Heart left ventricle (tissue), 16 donors: ENCODE measurements at regions of chr11 and their contacts with region 1.

Region 1: DNA sequence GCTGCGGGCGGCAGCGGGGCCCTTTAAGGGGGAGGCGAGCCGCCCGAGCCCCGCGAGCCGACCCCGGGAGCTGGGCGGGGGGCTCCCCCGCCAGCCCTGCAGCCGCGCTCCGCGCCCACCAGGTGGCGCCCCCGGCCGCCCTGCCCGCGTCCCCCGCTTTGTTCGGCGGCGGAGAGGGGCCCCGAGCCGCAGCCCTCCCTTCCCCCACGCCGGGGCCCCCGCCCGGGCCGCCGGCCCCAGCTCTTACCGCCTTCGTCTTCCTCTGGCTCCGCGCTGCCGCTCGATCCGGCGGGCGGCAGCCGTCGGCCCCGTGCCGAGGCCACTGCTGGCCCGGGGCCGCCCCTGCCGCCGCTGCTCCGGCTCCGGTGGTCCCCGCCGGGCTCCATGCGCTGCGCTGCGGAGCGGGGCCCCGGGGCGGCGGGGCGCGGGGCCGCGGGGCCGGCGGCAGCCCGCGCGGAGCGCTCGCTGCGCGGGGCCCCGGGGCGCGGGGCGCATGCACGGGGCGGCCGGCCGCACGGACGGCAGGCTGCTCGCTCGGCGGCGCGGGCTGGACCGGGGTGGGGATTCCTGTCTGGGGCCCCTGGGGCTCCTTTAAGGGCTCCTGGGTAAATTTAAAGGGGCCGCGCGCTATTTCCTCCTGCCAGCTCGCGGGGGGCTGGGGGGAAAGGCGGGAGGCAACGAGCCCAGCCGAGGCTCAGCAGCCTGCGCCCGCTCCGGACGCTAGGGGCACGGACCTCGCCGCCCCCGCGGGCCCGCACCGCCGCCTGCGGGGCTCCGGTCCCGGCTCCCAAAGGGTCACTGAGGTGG is at the start of gene ZFTA:
- DNase-seq: peak; percentile 72 to 85 (median 76)
- ATAC-seq: peak in 3 of 4 donors; percentile 39 to 49 (median 44)
- H3K4me3 ChIP-seq: peak within 1 kb of the TSS; percentile 62 to 99 (median 88)
- H3K27ac ChIP-seq: peak within 1 kb of the TSS; percentile 72 to 91 (median 86)
- H3K4me1 ChIP-seq: peaks cover 0 to 39% (median 21%) of the 10 kb centered on the region in 12 donors
- H3K27me3 ChIP-seq: peaks cover 0 to 10% (median 0%) of the 10 kb centered on the region in 9 donors
- CTCF ChIP-seq: peak in 11 of 12 donors; percentile 9 to 96 (median 65)
- POLR2A ChIP-seq: no peak
- total RNA-seq, gene ZFTA: 8.1 to 17.9 (median 10.6) TPM

Region 2: GRCh38 chr11:63813035-63813562 is 44.7 kb after region 1 on chr11 and contains the start of gene SPINDOC:
- intact Hi-C with region 1: loop called (anchors 1 to 5 kb)
- DNase-seq: peak; percentile 85 to 90 (median 88)
- ATAC-seq: peak; percentile 63 to 97 (median 94)
- H3K4me3 ChIP-seq: peak within 1 kb of the TSS; percentile 72 to 100 (median 90)
- H3K27ac ChIP-seq: peak within 1 kb of the TSS in 11 of 12 donors; percentile 63 to 89 (median 80)
- H3K4me1 ChIP-seq: peaks cover 6 to 28% (median 21%) of the 10 kb centered on the region in 12 donors
- H3K27me3 ChIP-seq: no peaks in the 10 kb centered on the region
- CTCF ChIP-seq: no peak
- POLR2A ChIP-seq: peak in 1 of 2 donors; percentile 52
- total RNA-seq, gene SPINDOC: 7.8 to 11.8 (median 10.6) TPM

Region 3: GRCh38 chr11:63866211-63866610 is 97.8 kb after region 1 on chr11:
- intact Hi-C with region 1: no loop called
- DNase-seq: peak in 2 of 5 donors; percentile 29 to 48
- ATAC-seq: no peak
- H3K4me3 ChIP-seq: no peak overlapping the region
- H3K27ac ChIP-seq: peak overlapping the region in 1 of 12 donors; percentile 42
- H3K4me1 ChIP-seq: peaks cover 9 to 84% (median 53%) of the 10 kb centered on the region in 12 donors
- H3K27me3 ChIP-seq: no peaks in the 10 kb centered on the region
- CTCF ChIP-seq: no peak
- POLR2A ChIP-seq: no peak

Region 4: DNA sequence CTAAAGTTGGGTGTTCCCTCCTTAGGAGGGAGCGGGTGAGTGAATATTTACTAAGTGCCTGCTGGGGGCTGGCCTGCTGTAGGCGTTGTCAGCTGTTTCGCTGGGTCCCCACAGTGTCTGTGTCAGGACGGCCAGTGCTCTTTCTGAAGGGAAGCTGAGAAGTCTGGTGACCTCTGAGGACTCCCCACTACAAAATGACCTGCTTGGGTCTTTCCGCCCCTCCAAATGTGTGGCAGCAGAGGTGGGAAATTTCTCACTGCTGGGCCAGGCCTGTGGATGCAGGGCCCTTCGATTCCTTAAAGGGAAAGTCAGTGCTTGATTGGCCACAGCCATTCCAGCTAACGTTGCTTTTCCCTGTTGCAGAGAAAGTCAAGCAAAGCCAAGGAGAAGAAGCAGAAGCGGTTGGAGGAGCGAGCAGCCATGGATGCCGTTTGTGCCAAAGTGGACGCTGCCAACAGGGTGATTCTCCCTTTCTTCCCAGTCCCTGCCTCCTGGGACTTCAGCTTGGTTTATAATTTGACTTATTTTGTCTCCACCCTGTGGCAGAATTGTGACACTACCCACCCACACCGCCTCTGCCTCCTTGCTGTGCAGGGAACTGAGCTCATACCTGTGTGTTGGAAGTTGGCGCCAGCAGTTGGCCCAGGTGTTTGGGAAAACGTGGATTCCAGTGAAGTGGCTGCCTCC is 177.2 kb after region 1 on chr11:
- intact Hi-C with region 1: loop called (anchors 2 to 10 kb)
- DNase-seq: peak; percentile 65 to 78 (median 70)
- ATAC-seq: peak; percentile 55 to 88 (median 83)
- H3K4me3 ChIP-seq: peak overlapping the region in 10 of 12 donors; percentile 0 to 46 (median 27)
- H3K27ac ChIP-seq: peak overlapping the region; percentile 12 to 83 (median 68)
- H3K4me1 ChIP-seq: peaks cover 0 to 31% (median 22%) of the 10 kb centered on the region in 12 donors
- H3K27me3 ChIP-seq: no peaks in the 10 kb centered on the region
- CTCF ChIP-seq: peak; percentile 55 to 85 (median 75)
- POLR2A ChIP-seq: no peak

Region 5: GRCh38 chr11:64152841-64153691 is 384.6 kb after region 1 on chr11:
- intact Hi-C with region 1: loop called in 3 of 10 experiments (anchors 10 kb)
- DNase-seq: peak; percentile 58 to 86 (median 64)
- ATAC-seq: peak; percentile 9 to 58 (median 50)
- H3K4me3 ChIP-seq: no peak overlapping the region
- H3K27ac ChIP-seq: no peak overlapping the region
- H3K4me1 ChIP-seq: peaks cover 0 to 75% (median 21%) of the 10 kb centered on the region in 12 donors
- H3K27me3 ChIP-seq: no peaks in the 10 kb centered on the region
- CTCF ChIP-seq: peak; percentile 97 to 100 (median 99)
- POLR2A ChIP-seq: no peak